ENCODE measurements at regions of chr6 and their contacts with region 1.

Region 1: DNA sequence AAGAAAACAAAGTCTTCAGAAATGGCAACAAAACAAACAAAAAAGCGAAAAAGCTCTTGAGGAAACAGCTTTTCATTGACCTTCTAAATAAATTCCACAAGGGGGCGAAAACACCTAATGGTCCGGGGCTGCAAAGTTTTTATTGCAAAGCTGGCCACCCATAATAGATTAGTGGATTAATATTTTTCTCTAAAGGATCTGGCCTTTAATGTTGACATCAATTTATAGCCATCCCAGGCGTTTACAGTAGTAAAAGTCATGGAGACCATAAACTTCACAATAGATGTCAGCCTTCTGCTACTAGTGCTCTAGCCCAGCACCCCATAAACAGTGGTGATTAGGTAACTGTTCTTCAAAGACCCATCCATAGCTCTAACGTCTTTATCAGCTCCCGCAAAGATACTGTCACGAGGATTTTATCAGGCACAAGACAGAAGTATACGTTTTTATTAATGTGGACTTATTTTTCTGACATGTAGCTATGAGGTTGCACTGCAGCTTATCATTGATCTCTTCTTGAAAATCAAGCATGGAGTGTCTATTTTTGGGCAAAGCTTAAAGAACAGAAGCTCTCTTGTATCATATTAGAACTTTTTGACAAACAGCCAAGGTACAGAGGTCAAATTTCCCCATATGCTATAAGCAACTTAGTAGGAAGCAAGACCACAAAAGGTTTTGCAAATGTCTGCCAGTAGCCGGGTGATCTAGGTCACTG is 4.7 kb downstream of the CITED2 start:
- DNase-seq: no peak
- ATAC-seq: peak; percentile 22
- H3K4me3 ChIP-seq: peak overlapping the region; percentile 19 to 97
- H3K27ac ChIP-seq: peak overlapping the region; percentile 95
- H3K4me1 ChIP-seq: peaks cover 41% of the 10 kb centered on the region
- H3K27me3 ChIP-seq: no peaks in the 10 kb centered on the region
- CTCF ChIP-seq: peak; percentile 75

Region 2: DNA sequence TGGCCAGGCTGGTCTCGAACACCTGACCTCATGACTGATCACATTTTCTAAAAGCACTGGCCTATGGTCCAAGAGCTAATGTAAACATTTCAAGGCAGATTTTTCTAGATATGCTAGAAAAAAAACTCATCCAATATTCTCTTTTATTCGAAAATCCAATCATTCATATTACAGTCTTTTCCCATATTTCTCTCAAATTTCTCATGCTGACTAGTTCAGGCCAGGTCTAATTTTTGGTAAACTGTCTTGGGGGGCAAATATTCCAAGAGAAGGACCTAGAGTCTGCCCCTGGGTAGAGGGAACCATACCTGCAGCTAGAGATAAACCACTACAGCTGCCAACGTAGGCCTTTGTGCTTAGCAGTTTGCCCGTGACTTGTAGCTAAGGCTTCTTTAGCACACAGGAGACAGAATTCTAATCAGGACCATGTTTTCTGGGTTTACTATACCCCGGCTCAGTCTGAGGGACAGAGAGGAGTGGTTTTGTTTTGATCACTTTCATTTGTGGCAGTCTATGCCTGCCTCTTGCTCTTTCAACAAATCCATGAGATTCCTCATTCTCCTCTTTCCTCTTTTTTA is 76.5 kb after region 1 on chr6:
- CTCF ChIA-PET with region 1: no interaction called
- POLR2A ChIA-PET with region 1: interaction called, 10 read pairs
- in situ Hi-C with region 1: no loop called
- intact Hi-C with region 1: no loop called
- DNase-seq: no peak
- ATAC-seq: no peak
- H3K4me3 ChIP-seq: no peak overlapping the region
- H3K27ac ChIP-seq: no peak overlapping the region
- H3K4me1 ChIP-seq: no peaks in the 10 kb centered on the region
- H3K27me3 ChIP-seq: no peaks in the 10 kb centered on the region
- CTCF ChIP-seq: no peak

Region 3: GRCh38 chr6:139577763-139578604 is 208.3 kb after region 1 on chr6:
- CTCF ChIA-PET with region 1: no interaction called
- POLR2A ChIA-PET with region 1: no interaction called
- in situ Hi-C with region 1: no loop called
- intact Hi-C with region 1: no loop called
- DNase-seq: no peak
- ATAC-seq: no peak; the same call in 1 of the 2 replicates
- H3K4me3 ChIP-seq: no peak overlapping the region
- H3K27ac ChIP-seq: peak overlapping the region; percentile 68
- H3K4me1 ChIP-seq: peaks cover 8% of the 10 kb centered on the region
- H3K27me3 ChIP-seq: no peaks in the 10 kb centered on the region
- CTCF ChIP-seq: no peak

Region 4: DNA sequence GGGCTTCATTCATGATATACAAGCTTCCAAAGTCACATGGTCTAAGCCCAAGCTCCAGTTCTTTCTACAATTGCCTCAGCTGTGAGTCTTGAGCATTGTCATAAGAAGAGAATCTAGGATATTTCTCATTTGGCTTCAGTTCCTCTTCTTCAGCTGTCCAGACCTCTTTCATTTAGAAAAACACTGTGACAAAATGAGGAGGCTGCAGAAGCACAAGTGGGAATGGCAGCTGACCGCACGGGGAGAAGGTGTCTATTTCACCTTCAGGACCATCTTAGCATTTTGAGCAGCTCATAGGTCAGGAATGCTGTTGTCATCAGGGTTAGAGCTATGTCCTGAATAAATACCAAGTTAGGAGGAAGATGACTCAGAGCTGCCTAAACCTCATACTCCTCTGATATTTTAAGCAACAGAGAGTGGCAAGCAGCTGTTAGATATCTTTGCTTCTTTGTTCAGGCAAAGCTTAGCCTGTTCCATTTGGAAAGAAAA is 394.8 kb after region 1 on chr6:
- CTCF ChIA-PET with region 1: no interaction called
- POLR2A ChIA-PET with region 1: interaction called, 23 read pairs
- in situ Hi-C with region 1: no loop called
- intact Hi-C with region 1: loop called (anchors 2 kb)
- DNase-seq: peak; percentile 96
- ATAC-seq: peak; percentile 93
- H3K4me3 ChIP-seq: no peak overlapping the region
- H3K27ac ChIP-seq: peak overlapping the region; percentile 86
- H3K4me1 ChIP-seq: peaks cover 43% of the 10 kb centered on the region
- H3K27me3 ChIP-seq: no peaks in the 10 kb centered on the region
- CTCF ChIP-seq: no peak